Ascending aorta (tissue), 2 donors: ENCODE measurements at regions of chr15 and their contacts with region 1.

Region 1: DNA sequence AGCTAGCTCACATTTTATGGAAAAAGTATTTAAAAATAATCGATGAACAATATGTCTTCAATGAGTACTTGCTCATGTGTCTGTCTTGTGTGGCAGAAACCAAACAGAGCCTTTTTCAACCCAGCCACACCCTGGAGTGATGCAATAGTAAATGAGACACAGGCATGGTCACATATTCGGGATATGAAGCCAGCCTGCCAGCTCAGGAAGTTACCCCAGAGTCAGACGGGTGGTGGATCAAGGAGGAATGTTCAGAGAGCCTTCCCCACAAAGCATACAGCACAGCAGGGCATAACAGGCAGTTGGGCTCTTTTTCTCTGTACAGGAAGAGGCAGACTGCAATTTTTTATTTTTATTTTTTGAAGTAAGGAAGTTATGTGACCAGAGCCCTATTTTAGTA is 27.3 kb downstream of the LARP6 start:
- DNase-seq: peak; percentile 33 to 90
- H3K4me3 ChIP-seq: no peak overlapping the region
- H3K27ac ChIP-seq: peak overlapping the region; percentile 39 to 58
- H3K4me1 ChIP-seq: peaks cover 0 to 4% of the 10 kb centered on the region in 2 donors
- H3K27me3 ChIP-seq: no peaks in the 10 kb centered on the region
- CTCF ChIP-seq: no peak

Region 2: DNA sequence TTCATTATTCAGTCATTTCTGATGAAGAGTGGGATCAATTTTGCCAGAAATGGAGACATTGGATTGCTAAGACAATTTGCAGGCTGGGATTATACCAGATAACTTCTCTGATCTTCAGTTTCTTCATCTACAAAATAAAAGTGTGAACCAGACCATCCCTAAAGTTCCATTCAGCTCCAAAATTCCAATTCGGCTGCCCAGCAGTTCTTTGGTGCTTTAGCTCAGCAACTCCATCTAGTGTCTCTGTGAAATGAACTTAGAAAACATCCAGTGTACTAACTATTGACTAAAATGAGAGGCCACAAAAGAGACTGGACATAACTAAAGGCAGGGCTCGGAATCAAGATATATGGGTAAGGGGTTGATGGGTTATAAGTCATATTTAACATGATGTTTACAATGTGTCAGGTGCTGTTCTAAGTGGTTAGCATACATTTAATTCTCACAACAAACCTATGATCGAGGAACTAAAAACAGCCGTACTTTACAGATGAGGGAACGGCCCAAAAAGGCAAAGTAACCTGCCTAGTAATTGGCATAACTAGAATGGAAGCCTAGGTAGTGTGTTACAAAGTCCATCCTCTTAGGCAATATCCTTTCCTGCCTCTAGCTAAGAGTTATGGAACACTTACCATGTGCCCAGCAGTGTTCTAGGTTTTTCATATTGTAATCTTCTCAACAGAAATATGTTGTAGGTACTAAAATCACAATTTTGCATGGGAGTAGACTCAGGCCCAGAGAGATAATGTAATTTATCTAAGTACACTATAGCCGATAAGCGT is 48.6 kb after region 1 on chr15:
- intact Hi-C with region 1: loop called (anchors 1 kb)
- DNase-seq: no peak
- H3K4me3 ChIP-seq: no peak overlapping the region
- H3K27ac ChIP-seq: no peak overlapping the region
- H3K4me1 ChIP-seq: peaks cover 0 to 2% of the 10 kb centered on the region in 2 donors
- H3K27me3 ChIP-seq: no peaks in the 10 kb centered on the region
- CTCF ChIP-seq: peak; percentile 53 to 76 (median 57)